ENCODE measurements at regions of chr3 and their contacts with region 1.

Region 1: GRCh38 chr3:111989061-111989678 is 9.6 kb upstream of the TAGLN3 start:
- DNase-seq: no peak
- H3K4me3 Mint-ChIP-seq: no peak overlapping the region
- H3K27ac Mint-ChIP-seq: no peak overlapping the region
- H3K4me1 Mint-ChIP-seq: peaks cover 31% of the 10 kb centered on the region
- H3K27me3 Mint-ChIP-seq: no peaks in the 10 kb centered on the region

Region 2: DNA sequence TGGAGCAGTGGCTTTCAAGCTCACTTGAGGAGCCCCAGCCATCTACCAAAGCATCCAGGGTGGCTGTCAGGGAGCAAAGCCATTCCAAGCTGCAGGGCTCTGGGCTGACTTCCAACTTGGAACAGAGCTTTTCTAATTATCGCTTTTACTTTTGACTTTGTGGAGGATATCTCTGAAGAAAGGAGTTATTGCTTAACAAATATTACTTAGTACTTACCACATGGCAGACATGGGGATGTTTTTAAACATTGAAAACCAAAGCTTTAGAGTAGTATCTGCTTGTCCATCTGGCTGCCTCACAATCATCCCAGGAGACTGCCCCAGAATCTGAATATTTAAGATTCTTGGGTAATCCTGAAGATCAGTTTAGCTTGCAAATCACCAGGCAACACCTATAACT is 18.5 kb after region 1 on chr3:
- CTCF ChIA-PET with region 1: interaction called, 202 read pairs
- POLR2A ChIA-PET with region 1: interaction called, 7 read pairs
- DNase-seq: no peak
- H3K4me3 Mint-ChIP-seq: no peak overlapping the region
- H3K27ac Mint-ChIP-seq: no peak overlapping the region
- H3K4me1 Mint-ChIP-seq: peaks cover 24% of the 10 kb centered on the region
- H3K27me3 Mint-ChIP-seq: no peaks in the 10 kb centered on the region

Region 3: GRCh38 chr3:112043603-112044201 is 54.5 kb after region 1 on chr3:
- CTCF ChIA-PET with region 1: interaction called, 30 read pairs
- POLR2A ChIA-PET with region 1: no interaction called
- DNase-seq: peak; percentile 48
- H3K4me3 Mint-ChIP-seq: no peak overlapping the region
- H3K27ac Mint-ChIP-seq: no peak overlapping the region
- H3K4me1 Mint-ChIP-seq: peaks cover 4% of the 10 kb centered on the region
- H3K27me3 Mint-ChIP-seq: peaks cover 2% of the 10 kb centered on the region

Measured in activated CD4-positive, alpha-beta memory T cell treated with anti-CD3 and anti-CD28 coated beads, Interleukin-2, amount 10 ng/mL, durations not matched to agents 7 days and 5 days (primary cell).